Pancreas (tissue), 10 donors: ENCODE measurements at regions of chr13 and their contacts with region 1.

Region 1: DNA sequence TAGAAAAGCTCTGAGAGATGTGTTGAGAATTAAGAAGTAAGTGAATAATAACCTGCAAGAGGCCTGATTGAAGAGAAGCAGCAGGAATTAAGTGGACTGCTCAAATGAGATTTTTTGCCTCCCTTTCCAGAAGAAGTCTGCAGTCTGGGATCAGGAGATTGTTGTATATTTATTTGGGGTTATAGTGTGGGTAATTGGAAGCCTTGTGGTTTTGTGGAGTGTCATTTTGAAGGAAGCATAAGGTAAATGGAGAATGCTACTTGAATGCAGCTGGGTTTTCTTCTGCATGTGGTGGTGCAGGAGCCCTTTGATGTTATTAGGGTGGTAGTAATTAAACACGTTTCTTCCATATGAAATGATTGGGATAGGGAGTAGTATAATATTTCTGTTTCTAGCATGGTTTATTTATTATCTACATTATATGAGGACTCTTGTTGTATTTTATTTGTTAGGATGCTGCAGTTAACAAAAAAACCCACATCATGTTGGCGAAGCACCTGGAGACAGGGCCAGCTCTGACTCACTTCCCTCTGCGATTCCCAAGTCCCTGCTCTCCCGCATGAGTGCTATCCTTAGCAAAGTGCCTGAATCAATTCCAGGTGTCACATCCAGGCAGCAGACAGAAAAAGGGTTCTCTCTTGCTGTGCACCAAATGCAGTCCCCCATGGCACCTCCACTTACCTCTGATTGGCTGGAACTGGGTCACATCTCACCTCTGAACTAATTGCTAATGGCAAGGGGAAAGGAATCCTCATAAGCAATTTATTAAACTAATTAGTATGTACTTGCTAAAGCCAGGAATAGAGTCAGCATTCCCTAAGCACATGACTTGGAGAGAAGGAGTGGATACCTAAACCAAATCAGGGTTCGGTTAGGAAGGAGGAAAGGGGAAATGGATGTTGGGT is 54.8 kb downstream of the DGKH start:
- DNase-seq: no peak
- ATAC-seq: no peak
- H3K4me3 ChIP-seq: no peak overlapping the region
- H3K27ac ChIP-seq: no peak overlapping the region
- H3K4me1 ChIP-seq: no peaks in the 10 kb centered on the region
- H3K27me3 ChIP-seq: no peaks in the 10 kb centered on the region
- CTCF ChIP-seq: no peak

Region 2: DNA sequence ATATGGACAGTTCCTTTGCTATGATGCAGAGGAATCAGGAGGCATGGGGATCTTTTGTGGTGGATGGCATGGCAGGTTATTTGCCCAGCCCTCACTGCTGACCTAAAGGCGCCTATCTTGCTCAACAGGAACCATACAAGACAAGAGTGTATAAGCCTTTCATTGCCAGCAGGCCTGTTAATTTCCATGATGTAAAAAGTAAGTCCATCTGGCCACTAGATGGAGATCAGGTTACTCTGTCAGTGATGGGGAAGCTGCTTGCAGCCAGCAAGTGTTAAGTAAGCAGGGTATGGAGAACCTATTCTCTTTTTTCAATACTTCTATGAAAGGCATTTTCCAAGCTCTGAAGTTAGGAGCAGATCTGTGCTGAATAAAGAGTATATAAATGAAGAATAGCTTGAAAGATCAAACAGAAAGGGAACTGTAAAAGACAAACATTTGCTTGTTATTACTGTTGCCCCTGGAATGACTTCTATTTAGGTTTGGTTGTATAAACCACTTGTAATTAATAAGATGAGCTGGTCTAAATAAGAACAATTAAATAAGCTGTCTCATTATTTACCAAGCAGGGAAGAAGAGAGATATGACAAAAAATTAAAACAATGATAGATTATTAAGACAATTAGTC is 435.0 kb before region 1 on chr13:
- intact Hi-C with region 1: loop called in 2 of 3 experiments (anchors 5 to 10 kb)
- DNase-seq: peak in 3 of 6 donors; percentile 53 to 58 (median 58)
- ATAC-seq: peak; percentile 96 to 100 (median 100)
- H3K4me3 ChIP-seq: no peak overlapping the region
- H3K27ac ChIP-seq: no peak overlapping the region
- H3K4me1 ChIP-seq: peaks cover 0 to 10% (median 4%) of the 10 kb centered on the region in 3 donors
- H3K27me3 ChIP-seq: no peaks in the 10 kb centered on the region
- CTCF ChIP-seq: peak; percentile 45 to 80 (median 62)

Region 3: DNA sequence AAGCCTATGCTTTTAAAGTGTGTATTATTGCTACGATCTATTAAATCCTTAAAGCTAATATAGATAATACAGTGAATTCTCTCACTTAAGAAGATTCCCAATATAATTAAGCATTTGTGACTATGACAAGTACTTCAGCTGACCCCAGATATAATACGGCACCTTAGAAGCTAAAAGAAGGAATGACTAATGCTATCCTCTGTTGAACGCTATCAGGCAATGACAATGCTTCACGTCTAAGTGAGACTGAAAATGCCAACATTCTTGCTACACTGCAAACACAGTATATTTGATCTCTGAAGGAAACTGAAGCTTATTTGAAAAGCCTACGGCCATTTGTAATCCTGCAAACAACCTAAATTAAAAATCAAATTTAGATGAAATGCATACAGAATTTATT is 162.0 kb before region 1 on chr13:
- intact Hi-C with region 1: no loop called
- DNase-seq: no peak
- ATAC-seq: no peak
- H3K4me3 ChIP-seq: no peak overlapping the region
- H3K27ac ChIP-seq: no peak overlapping the region
- H3K4me1 ChIP-seq: peaks cover 0 to 10% (median 7%) of the 10 kb centered on the region in 3 donors
- H3K27me3 ChIP-seq: no peaks in the 10 kb centered on the region
- CTCF ChIP-seq: no peak